ENCODE measurements at regions of chr3 and their contacts with region 1.

Region 1: DNA sequence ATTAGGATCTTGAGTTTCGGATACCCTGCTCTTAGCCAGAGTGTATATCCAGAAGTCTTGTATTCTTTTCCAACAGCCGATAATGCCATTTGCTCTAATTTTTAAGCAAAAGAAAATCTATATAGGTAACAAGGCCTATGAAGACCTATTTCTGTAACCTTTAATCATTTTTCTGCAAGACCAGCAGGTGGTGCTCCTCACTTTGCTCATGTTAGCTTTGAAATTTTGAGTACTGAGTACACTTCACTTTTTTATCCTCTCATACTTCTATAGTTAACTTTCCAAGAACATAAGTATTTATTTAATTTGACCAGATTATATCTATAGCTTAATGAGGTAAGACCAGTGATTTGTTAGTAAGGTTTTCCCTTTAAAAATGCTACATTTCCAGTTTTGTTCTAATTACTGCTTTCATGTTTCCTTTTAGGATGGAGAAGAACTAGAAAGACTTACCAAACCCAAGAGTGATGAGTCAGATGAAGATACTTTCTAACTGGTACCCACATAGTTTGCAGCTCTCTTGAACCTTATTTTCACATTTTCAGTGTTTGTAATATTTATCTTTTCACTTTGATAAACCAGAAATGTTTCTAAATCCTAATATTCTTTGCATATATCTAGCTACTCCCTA is 20.5 kb downstream of the SLC35A5 start:
- DNase-seq: peak; percentile 21
- H3K4me3 Mint-ChIP-seq: no peak overlapping the region
- H3K27ac Mint-ChIP-seq: no peak overlapping the region
- H3K4me1 Mint-ChIP-seq: peaks cover 10% of the 10 kb centered on the region
- H3K27me3 Mint-ChIP-seq: no peaks in the 10 kb centered on the region

Region 2: GRCh38 chr3:112814266-112814665 is 231.9 kb after region 1 on chr3:
- intact Hi-C with region 1: loop called (anchors 5 kb)
- DNase-seq: no peak
- H3K4me3 Mint-ChIP-seq: no peak overlapping the region
- H3K27ac Mint-ChIP-seq: no peak overlapping the region
- H3K4me1 Mint-ChIP-seq: peaks cover 27% of the 10 kb centered on the region
- H3K27me3 Mint-ChIP-seq: peaks cover 8% of the 10 kb centered on the region